GM12878 (cell line): ENCODE measurements at regions of chr14 and their contacts with region 1.

Region 1: GRCh38 chr14:20682435-20683124 is 1.8 kb upstream of the RNASE4 start:
- DNase-seq: no peak
- ATAC-seq: peak; percentile 74
- H3K4me3 ChIP-seq: peak overlapping the region; percentile 73
- H3K27ac ChIP-seq: peak overlapping the region; percentile 99
- H3K4me1 ChIP-seq: peaks cover 23% of the 10 kb centered on the region
- H3K27me3 ChIP-seq: no peaks in the 10 kb centered on the region
- CTCF ChIP-seq: no peak
- EP300 ChIP-seq: no peak
- POLR2A ChIP-seq: peak; percentile 87
- RAD21 ChIP-seq: no peak

Region 2: GRCh38 chr14:20343092-20343861 is 339.3 kb before region 1 on chr14 and contains the start of gene PARP2:
- CTCF ChIA-PET with region 1: interaction called, 5 read pairs
- POLR2A ChIA-PET with region 1: interaction called, 15 read pairs
- RAD21 ChIA-PET with region 1: interaction called, 11 read pairs
- SMC1A ChIA-PET with region 1: interaction called, 12 read pairs
- in situ Hi-C with region 1: no loop called
- intact Hi-C with region 1: loop called (anchors 1 kb)
- DNase-seq: peak; percentile 99
- ATAC-seq: peak; percentile 96
- H3K4me3 ChIP-seq: peak within 1 kb of the TSS; percentile 81
- H3K27ac ChIP-seq: peak within 1 kb of the TSS; percentile 89
- H3K4me1 ChIP-seq: no peaks in the 10 kb centered on the region
- H3K27me3 ChIP-seq: no peaks in the 10 kb centered on the region
- CTCF ChIP-seq: no peak
- EP300 ChIP-seq: no peak
- POLR2A ChIP-seq: peak; percentile 97
- RAD21 ChIP-seq: no peak
- polyA plus RNA-seq, gene PARP2: 30.4 to 38.0 TPM

Region 3: GRCh38 chr14:20624495-20625070 is 58.0 kb before region 1 on chr14:
- CTCF ChIA-PET with region 1: interaction called, 79 read pairs
- POLR2A ChIA-PET with region 1: interaction called, 3 read pairs
- RAD21 ChIA-PET with region 1: interaction called, 11 read pairs
- SMC1A ChIA-PET with region 1: interaction called, 49 read pairs
- in situ Hi-C with region 1: no loop called
- intact Hi-C with region 1: no loop called
- DNase-seq: no peak
- ATAC-seq: peak; percentile 70
- H3K4me3 ChIP-seq: peak overlapping the region; percentile 72
- H3K27ac ChIP-seq: no peak overlapping the region
- H3K4me1 ChIP-seq: peaks cover 24% of the 10 kb centered on the region
- H3K27me3 ChIP-seq: peaks cover 0 to 2% of the 10 kb centered on the region in 2 experiments; a peak in 2 of 4 replicates
- CTCF ChIP-seq: no peak
- EP300 ChIP-seq: no peak
- POLR2A ChIP-seq: no peak
- RAD21 ChIP-seq: no peak

Region 4: DNA sequence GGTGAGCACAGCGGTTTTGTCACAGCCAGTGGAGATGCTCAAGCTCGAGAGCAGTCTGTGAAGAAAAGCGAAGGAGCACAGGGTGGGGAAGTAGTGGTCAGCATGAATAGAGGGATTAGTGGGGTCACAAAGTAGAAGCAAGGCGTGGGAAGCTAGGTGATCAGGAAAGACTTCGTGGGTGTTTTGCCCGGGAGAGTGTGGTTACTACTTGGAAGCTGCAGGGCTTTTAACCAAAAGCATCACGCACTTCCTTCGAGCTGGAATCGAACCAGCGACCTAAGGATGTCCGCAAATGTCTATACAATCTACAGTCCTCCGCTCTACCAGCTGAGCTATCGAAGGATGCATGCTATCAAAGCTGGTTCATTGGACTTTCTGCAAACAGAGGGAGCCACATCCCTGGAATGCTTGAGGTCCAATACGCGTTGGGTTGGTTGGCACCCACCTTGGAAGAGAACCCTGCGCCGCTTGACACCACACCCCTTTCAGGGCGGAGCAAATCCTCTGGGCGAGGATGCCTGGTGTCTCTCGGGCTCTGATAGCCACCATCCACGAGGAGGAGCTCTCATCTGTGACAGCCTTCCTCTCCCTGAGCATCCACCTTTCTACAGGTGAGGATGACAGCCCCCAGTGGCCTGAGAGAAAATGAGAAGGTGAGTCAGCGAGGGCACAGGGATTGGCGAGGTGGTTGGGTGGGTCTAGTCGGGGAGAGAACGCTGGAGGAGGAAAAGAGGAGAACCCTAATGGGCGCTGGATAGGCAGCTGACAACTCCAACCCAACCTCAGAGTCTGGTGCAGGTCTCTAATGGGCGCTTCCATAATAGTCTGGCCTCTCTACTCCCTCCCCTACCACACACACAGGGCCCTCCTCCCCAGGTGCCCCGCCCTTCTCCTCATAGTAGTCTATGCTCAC is 25.1 kb before region 1 on chr14:
- CTCF ChIA-PET with region 1: interaction called, 214 read pairs
- POLR2A ChIA-PET with region 1: interaction called, 59 read pairs
- RAD21 ChIA-PET with region 1: interaction called, 156 read pairs
- SMC1A ChIA-PET with region 1: interaction called, 150 read pairs
- in situ Hi-C with region 1: no loop called
- intact Hi-C with region 1: no loop called
- DNase-seq: no peak
- ATAC-seq: peak; percentile 72
- H3K4me3 ChIP-seq: no peak overlapping the region
- H3K27ac ChIP-seq: no peak overlapping the region
- H3K4me1 ChIP-seq: no peaks in the 10 kb centered on the region; the same call in 1 of the 2 replicates
- H3K27me3 ChIP-seq: no peaks in the 10 kb centered on the region; a peak in 2 of 4 replicates
- CTCF ChIP-seq: peak in 2 of 3 experiments; percentile 24 to 27; a peak in 3 of 6 replicates
- EP300 ChIP-seq: no peak
- POLR2A ChIP-seq: no peak; the same call in 1 of the 2 replicates
- RAD21 ChIP-seq: no peak

Region 5: DNA sequence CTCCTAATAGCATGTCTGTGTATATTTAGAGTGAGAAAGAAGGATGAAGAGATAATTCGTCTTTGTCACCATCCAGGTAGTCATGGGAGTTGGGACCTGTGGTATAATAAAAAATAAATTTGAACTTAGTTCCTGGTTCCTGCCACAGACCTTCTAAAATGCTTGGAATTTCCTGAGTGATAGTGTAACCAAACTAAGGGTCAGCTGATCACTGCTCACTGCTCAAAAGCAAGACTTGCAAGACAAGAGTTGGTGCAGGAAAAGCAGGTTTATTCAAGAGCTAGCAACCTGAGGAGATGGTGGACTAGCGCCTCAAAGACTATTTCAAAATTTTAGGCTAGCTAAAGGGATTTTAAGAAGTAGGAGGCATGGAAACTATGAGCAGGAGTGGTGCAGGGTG is 25.0 kb after region 1 on chr14:
- CTCF ChIA-PET with region 1: no interaction called
- POLR2A ChIA-PET with region 1: no interaction called
- RAD21 ChIA-PET with region 1: no interaction called
- SMC1A ChIA-PET with region 1: no interaction called
- in situ Hi-C with region 1: no loop called
- intact Hi-C with region 1: no loop called
- DNase-seq: no peak
- ATAC-seq: no peak
- H3K4me3 ChIP-seq: no peak overlapping the region
- H3K27ac ChIP-seq: no peak overlapping the region
- H3K4me1 ChIP-seq: no peaks in the 10 kb centered on the region
- H3K27me3 ChIP-seq: no peaks in the 10 kb centered on the region
- CTCF ChIP-seq: no peak
- EP300 ChIP-seq: no peak
- POLR2A ChIP-seq: no peak
- RAD21 ChIP-seq: no peak

Region 6: GRCh38 chr14:21093769-21094681 is 411.4 kb after region 1 on chr14:
- CTCF ChIA-PET with region 1: no interaction called
- POLR2A ChIA-PET with region 1: no interaction called
- RAD21 ChIA-PET with region 1: no interaction called
- SMC1A ChIA-PET with region 1: no interaction called
- in situ Hi-C with region 1: no loop called
- intact Hi-C with region 1: no loop called
- DNase-seq: no peak
- ATAC-seq: no peak
- H3K4me3 ChIP-seq: no peak overlapping the region
- H3K27ac ChIP-seq: no peak overlapping the region
- H3K4me1 ChIP-seq: no peaks in the 10 kb centered on the region
- H3K27me3 ChIP-seq: peaks cover 2 to 3% of the 10 kb centered on the region in 2 experiments; a peak in 2 of 4 replicates
- CTCF ChIP-seq: 0 out of 6 replicates have a peak, but pooled peaks of 2 of the 3 experiments have one; percentile 2 to 16
- EP300 ChIP-seq: no peak
- POLR2A ChIP-seq: no peak
- RAD21 ChIP-seq: no peak